ENCODE measurements at regions of chr6 and their contacts with region 1.

Region 1: DNA sequence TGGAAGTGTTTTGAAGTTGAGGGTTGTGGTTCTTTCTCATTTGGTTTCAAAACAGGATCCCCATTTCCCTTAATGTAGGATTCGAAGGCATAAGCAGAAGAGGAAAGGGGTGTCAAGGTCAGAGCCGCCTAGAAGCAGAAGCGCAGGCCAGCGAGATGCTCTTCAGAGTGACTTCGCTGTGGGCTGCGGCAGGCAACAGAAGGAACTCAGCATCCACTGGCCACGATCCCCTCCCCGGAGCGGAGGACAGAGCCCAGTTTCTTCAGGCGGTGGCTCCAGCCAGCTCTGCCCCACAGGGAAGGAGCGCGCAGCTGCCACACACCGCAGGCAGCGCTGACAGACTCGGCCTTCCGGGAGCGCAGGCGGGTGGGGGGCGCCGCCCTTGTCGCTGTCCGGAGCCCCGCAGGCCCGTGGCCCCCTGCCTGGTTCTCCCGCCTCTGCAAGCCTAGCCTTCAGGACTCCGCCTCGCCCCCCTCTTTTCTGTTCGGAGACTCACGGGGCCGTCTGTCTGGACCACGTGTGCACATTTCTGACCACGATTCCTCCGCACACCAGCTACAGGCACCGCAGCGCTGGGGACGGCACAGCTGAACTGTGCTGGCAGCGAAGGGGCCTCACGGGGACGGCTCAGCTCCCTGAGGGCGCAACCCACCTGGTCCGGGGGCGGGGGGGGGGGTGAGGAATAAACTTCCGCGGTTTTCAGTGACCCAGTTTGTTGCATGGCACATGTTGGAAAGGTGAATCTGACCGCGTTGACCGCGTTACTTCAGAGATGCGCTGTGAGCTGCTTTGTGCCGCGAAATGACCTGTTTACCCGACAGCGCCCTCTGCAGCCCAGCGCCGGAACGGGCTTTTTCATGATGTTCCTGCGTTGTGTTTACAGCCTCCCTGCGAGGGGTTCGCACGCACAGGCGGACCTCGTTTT is 26.1 kb downstream of the TTLL2 start:
- DNase-seq: peak; percentile 95
- H3K4me3 Mint-ChIP-seq: peak overlapping the region; percentile 69
- H3K27ac Mint-ChIP-seq: peak overlapping the region; percentile 82
- H3K4me1 Mint-ChIP-seq: peaks cover 21% of the 10 kb centered on the region
- H3K27me3 Mint-ChIP-seq: peaks cover 21% of the 10 kb centered on the region

Region 2: DNA sequence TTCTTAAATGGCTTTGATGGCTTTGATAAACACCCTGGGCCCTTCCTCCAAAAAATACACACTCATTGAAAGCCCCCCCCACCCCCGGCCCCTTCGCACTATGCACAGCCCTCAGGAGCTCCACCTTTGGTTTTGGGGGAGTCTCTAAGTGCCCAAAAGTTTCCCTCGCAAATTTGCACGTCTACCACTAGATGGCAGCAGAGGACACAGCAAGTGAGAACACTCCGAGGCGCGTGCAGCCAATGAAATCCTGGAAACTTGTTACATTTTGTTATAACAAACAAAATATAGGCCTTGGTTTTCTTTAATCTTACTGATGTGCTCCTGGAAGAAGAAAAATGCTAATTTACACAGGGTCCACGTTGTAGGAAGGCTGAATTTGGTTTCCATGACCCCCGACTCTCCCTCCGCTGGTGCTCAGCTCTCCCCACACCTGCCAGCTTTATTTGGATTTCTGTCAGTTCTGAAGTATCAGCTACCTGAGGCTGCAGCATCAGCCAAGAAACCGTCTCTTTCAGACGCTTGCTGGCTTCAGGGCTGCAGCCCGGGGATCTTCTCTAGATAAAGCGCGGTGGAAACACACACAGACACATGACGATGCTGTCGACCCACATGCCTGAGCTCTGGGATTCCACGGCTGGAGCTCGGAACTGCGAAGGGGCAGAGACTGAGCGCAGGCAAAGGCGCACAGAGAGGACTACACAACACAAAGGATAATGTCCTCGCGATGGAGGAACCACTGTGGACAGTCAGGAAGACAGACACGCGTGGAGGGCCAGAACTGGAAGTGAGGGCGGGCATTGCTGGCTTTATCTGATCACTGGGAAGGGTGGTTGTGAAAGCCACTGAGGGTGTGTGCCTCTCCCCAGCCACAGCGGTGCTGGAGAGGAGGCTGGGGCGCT is 575.6 kb before region 1 on chr6:
- CTCF ChIA-PET with region 1: no interaction called
- intact Hi-C with region 1: loop called (anchors 5 kb)
- DNase-seq: peak; percentile 77
- H3K4me3 Mint-ChIP-seq: no peak overlapping the region
- H3K27ac Mint-ChIP-seq: no peak overlapping the region
- H3K4me1 Mint-ChIP-seq: peaks cover 6% of the 10 kb centered on the region
- H3K27me3 Mint-ChIP-seq: peaks cover 5% of the 10 kb centered on the region

Region 3: DNA sequence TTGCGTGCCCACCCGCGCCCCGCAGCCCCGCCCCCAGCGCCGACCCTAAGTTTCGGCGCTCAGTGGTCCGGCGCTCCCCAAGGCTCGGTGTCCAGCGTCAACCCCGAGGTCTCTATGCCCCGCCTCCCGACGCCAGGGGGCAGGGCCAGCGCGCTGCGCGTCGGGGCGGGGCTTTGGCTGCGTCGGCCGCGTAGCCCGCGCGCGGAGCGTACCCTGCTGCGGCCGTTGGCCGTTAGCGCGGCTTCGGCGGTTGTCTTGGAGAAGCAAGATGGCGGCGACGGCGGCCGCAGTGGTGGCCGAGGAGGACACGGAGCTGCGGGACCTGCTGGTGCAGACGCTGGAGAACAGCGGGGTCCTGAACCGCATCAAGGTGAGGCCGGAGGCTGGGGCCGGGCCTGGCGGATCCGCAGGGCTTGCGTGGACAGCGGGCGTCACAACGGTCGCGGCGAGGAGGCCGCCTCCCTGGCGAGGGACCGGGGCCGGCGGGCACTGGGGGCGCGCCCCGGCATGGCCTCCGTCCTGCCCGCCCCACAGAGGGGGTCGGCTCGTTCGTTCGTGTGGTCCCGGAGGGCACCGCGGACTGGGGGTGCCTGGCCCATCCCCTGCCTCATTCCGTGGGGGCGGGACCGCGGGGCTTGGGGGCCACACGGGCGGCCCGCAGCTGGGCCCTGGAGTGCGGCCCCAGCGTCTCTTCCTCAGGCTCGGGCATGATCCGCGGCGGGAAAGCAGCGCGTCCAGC is 351.7 kb before region 1 on chr6 and contains the start of gene CEP43:
- CTCF ChIA-PET with region 1: no interaction called
- intact Hi-C with region 1: loop called (anchors 5 kb)
- DNase-seq: peak; percentile 82
- H3K4me3 Mint-ChIP-seq: peak within 1 kb of the TSS; percentile 86
- H3K27ac Mint-ChIP-seq: peak within 1 kb of the TSS; percentile 74
- H3K4me1 Mint-ChIP-seq: peaks cover 26% of the 10 kb centered on the region
- H3K27me3 Mint-ChIP-seq: no peaks in the 10 kb centered on the region
- total RNA-seq, gene CEP43: 19.6 to 20.3 TPM

Region 4: DNA sequence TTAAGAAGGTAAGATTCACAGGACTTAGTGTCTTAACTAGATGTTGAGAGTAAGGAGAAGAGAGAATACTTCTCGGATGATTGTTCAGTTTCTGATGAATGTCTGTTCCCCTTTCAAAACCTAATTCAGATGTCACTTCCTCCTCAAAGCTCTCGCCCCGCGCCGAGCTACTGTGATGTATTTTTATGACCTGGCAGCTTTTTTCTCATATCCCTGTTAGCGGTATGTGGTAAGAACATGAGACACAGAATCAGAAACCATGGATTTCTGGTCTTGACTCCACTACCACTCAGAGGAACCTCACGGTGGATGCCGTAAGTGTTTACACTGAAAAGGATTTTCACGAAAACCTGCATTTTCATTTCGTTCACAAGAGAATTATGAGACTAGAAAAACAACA is 303.4 kb before region 1 on chr6:
- CTCF ChIA-PET with region 1: no interaction called
- intact Hi-C with region 1: loop called (anchors 2 kb)
- DNase-seq: peak; percentile 84
- H3K4me3 Mint-ChIP-seq: peak overlapping the region; percentile 41
- H3K27ac Mint-ChIP-seq: peak overlapping the region; percentile 61
- H3K4me1 Mint-ChIP-seq: peaks cover 27% of the 10 kb centered on the region
- H3K27me3 Mint-ChIP-seq: no peaks in the 10 kb centered on the region

Region 5: GRCh38 chr6:167219967-167220512 is 131.0 kb before region 1 on chr6:
- CTCF ChIA-PET with region 1: no interaction called
- intact Hi-C with region 1: loop called (anchors 2 kb)
- DNase-seq: no peak
- H3K4me3 Mint-ChIP-seq: no peak overlapping the region
- H3K27ac Mint-ChIP-seq: no peak overlapping the region
- H3K4me1 Mint-ChIP-seq: no peaks in the 10 kb centered on the region
- H3K27me3 Mint-ChIP-seq: no peaks in the 10 kb centered on the region

Region 6: DNA sequence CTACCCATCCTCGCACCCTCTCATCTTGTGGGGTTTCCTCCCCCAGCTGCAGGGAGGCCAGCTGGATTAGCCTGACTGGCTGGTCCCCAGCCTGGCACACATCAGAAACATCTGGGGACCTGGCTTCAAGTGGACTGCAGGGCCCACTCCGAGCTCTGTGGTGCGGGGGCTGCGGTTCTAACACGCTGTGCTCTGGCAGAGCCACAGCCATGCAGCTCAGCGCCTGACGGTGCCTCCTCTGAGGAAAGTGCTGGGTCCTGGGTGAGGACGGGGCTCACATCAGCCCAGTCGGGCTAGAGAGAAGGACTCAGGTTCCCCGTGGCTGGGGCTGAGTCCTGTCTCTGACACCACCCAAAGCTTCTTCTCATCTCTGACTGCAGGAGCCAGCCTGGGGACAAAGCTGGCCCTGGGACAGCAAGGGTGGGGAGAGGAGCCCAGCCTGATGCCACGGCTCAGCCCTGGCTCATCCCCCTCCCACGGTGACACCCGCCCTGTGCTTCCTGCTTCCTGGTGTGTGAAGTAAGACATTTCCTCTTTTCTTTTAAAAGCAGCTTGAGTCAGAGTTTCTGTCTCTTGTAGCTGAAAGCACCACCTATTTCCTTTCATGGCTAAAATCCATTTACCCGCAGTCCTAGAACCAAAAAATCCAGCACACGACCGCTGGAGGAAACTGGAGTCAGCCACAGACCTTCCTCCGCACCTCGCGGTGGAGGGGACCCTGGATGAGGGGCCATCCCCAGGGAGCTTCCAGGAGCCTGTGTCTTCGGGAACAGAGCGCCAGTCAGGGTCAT is 348.3 kb after region 1 on chr6:
- CTCF ChIA-PET with region 1: no interaction called
- intact Hi-C with region 1: loop called (anchors 1 kb)
- DNase-seq: peak; percentile 87
- H3K4me3 Mint-ChIP-seq: peak overlapping the region; percentile 61
- H3K27ac Mint-ChIP-seq: peak overlapping the region; percentile 92
- H3K4me1 Mint-ChIP-seq: peaks cover 19% of the 10 kb centered on the region
- H3K27me3 Mint-ChIP-seq: peaks cover 8% of the 10 kb centered on the region

Region 7: GRCh38 chr6:167898673-167899311 is 547.8 kb after region 1 on chr6:
- CTCF ChIA-PET with region 1: no interaction called
- intact Hi-C with region 1: loop called (anchors 10 kb)
- DNase-seq: no peak
- H3K4me3 Mint-ChIP-seq: no peak overlapping the region
- H3K27ac Mint-ChIP-seq: no peak overlapping the region
- H3K4me1 Mint-ChIP-seq: no peaks in the 10 kb centered on the region
- H3K27me3 Mint-ChIP-seq: no peaks in the 10 kb centered on the region

Region 8: DNA sequence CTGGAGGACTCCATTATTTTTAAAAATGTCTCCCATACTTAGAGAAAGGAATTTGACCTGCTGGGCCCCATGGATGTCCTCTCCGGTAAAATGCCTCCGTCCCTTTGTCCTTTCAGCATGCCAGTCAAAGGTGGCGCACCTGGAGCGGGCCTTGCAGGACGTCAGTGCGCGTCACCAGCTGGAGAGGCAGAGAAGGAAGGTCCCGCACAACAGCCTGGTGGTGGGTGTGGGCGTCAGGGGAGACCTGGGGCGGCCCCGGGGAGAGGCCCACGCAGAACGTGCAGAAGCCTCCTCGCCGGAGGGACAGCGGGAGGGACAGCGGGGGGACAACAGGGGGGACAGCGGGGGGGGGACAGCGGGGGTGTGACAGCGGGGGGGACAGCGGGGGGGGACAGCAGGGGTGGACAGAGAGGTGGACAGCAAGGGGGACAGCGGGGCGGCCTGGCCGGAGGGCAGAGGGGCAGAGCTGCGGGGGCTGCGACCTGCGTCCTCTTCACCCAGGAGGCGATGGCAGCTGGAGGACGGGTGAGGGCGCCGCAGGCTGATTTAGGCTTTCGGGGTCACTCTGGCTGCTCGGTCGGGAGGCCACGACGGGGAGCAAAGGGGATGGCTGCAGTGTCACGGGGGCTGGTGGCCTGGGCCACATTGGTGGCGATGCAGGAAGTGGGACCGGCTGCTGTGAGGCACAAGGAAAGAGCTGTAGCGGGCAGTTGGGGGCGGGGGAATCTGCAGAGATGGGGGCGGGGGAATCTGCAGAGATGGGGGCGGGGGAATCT is 645.6 kb after region 1 on chr6:
- CTCF ChIA-PET with region 1: no interaction called
- intact Hi-C with region 1: no loop called
- DNase-seq: no peak
- H3K4me3 Mint-ChIP-seq: no peak overlapping the region
- H3K27ac Mint-ChIP-seq: no peak overlapping the region
- H3K4me1 Mint-ChIP-seq: peaks cover 2% of the 10 kb centered on the region
- H3K27me3 Mint-ChIP-seq: peaks cover 16% of the 10 kb centered on the region